ENCODE measurements at regions of chr2 and their contacts with region 1.

Region 1: GRCh38 chr2:69893684-69894551 is at the start of gene SNRNP27:
- DNase-seq: peak; percentile 71
- H3K4me3 Mint-ChIP-seq: peak within 1 kb of the TSS; percentile 99
- H3K27ac Mint-ChIP-seq: peak within 1 kb of the TSS; percentile 93
- H3K4me1 Mint-ChIP-seq: peaks cover 36% of the 10 kb centered on the region
- H3K27me3 Mint-ChIP-seq: no peaks in the 10 kb centered on the region
- total RNA-seq, gene SNRNP27: 54.0 and 55.6 TPM in 2 replicates

Region 2: DNA sequence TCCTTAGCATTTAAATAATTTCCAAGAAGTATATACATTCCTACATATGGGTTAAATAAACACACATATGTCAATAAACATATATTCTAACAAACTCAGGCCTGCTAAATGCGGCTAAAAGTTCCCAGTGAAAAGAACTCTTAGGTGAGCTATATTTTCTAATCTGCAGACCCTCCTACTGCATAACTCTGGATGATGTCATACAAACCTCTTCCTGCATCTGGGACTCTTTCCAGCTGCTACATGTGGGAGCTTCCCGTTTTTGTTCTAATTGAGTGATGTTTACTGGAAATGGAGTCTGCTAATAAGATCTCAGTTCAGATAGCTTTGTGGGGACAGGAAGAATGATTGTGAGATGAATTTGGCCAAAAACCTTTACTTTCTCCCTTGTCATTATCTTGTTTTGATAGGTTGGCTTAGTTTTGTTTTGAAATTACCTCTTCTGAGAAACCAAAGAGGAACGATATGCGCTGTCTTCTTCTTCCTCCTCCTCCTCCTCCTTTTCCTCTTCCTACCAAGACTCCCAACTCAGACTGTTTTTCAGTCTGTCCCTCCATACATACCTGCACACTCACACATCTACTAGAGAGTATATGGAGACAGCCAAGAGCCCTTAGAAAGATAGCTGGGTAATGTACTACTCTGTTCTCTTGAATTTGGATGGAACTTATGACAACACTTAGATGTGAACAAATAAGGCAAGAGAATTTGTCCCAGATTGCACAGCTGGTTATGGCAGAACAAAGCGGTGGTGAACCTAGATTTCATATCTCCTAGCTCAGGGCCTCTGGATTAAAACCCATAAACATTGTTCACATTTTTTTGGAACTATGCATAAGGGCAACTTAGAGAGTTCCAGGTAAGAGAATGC is 210.6 kb before region 1 on chr2:
- intact Hi-C with region 1: no loop called
- DNase-seq: no peak
- H3K4me3 Mint-ChIP-seq: peak overlapping the region; percentile 27
- H3K27ac Mint-ChIP-seq: peak overlapping the region; percentile 83
- H3K4me1 Mint-ChIP-seq: peaks cover 51% of the 10 kb centered on the region
- H3K27me3 Mint-ChIP-seq: no peaks in the 10 kb centered on the region

Region 3: DNA sequence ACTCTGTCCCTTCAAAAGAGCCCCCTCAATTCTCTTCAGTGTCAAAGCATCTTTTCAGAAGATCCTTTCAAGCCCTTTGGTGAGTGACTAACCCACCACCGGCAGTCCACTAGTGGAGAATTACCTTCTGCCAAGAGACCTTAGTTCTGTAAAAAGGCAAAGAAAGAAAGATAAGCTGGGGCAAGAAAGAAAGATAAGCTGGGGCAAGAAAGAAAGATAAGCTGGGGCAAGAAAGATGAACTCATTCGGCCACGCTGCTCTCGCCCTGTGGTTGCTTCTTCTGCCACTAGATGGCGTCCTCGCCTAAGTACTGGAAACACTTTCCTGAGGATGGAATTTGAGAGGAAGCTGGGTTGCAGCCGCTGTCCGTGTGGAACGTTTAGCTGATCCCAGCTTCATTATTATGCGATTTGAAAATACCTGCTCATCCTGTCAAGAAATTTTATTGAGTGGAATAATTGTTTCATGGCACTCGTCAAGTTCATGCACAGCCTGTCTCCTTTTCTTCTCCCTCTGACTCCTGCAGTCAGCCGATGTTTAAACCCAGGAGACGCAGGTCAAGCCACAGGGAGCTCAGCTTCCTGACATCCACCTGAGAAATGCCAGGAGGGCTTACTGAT is 169.3 kb before region 1 on chr2:
- intact Hi-C with region 1: loop called (anchors 1 kb)
- DNase-seq: peak; percentile 76
- H3K4me3 Mint-ChIP-seq: peak overlapping the region; percentile 51
- H3K27ac Mint-ChIP-seq: peak overlapping the region; percentile 44
- H3K4me1 Mint-ChIP-seq: peaks cover 12% of the 10 kb centered on the region
- H3K27me3 Mint-ChIP-seq: peaks cover 8% of the 10 kb centered on the region